Activated CD4-positive, alpha-beta memory T cell treated with anti-CD3 and anti-CD28 coated beads for 36 hours (primary cell): ENCODE measurements at regions of chr1 and their contacts with region 1.

Region 1: GRCh38 chr1:115052454-115053083 is 22.9 kb downstream of the TSHB start:
- DNase-seq: peak; percentile 67
- H3K4me3 Mint-ChIP-seq: no peak overlapping the region
- H3K27ac Mint-ChIP-seq: no peak overlapping the region
- H3K4me1 Mint-ChIP-seq: peaks cover 3% of the 10 kb centered on the region
- H3K27me3 Mint-ChIP-seq: no peaks in the 10 kb centered on the region

Region 2: DNA sequence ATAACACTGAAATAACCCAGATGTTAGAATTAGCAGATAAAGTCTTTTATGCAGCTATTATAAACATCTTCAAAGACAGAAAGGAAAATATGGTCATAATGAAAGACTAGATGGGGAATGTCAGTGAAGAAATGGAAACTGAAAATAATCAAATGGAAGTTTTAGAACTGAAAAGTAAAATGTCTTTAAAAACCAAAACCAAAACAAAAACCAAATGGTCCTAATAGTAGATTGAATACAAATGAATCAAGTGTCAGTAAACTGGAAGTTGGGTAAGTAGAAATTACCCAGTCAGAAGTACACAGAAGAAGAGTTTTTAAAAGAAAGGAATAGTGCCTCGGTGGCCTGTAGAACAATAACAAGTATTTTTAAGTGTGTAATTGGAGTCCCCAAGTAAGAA is 125.2 kb before region 1 on chr1:
- CTCF ChIA-PET with region 1: no interaction called
- POLR2A ChIA-PET with region 1: no interaction called
- intact Hi-C with region 1: no loop called
- DNase-seq: no peak
- H3K4me3 Mint-ChIP-seq: no peak overlapping the region
- H3K27ac Mint-ChIP-seq: no peak overlapping the region
- H3K4me1 Mint-ChIP-seq: peaks cover 5% of the 10 kb centered on the region
- H3K27me3 Mint-ChIP-seq: peaks cover 21% of the 10 kb centered on the region

Region 3: DNA sequence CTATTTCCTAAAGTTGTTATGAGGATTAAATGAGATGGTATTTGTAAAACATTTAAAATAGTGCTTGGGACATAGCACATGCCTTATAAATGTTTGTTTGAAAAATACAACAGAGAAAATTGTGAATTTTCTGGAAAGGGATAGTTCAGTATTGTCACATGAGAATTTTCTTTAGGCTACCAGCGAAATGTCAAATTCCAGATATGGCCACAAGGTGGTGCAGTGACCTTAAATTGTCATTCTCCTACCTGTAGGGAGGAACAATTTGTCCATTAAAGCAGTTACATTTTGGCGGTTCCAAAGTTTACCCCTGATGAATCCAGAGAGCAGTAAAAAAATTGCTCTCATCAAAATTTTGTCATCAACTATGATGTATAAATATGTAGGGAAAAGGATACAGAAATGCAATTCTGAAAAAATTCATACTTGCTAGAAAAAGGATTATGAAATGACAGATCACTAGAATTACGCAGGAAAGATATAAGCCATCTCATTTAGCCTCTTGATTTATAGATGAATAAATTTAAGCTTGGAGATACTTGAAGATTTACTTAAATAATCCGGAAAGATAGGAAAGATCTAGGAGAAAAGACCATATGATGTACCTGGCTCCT is 73.2 kb before region 1 on chr1:
- CTCF ChIA-PET with region 1: interaction called, 22 read pairs
- POLR2A ChIA-PET with region 1: no interaction called
- intact Hi-C with region 1: loop called (anchors 1 kb)
- DNase-seq: peak; percentile 72
- H3K4me3 Mint-ChIP-seq: no peak overlapping the region
- H3K27ac Mint-ChIP-seq: no peak overlapping the region
- H3K4me1 Mint-ChIP-seq: no peaks in the 10 kb centered on the region
- H3K27me3 Mint-ChIP-seq: peaks cover 10% of the 10 kb centered on the region

Region 4: GRCh38 chr1:115041654-115042053 is 10.9 kb before region 1 on chr1:
- CTCF ChIA-PET with region 1: interaction called, 10 read pairs
- POLR2A ChIA-PET with region 1: no interaction called
- intact Hi-C with region 1: no loop called
- DNase-seq: no peak
- H3K4me3 Mint-ChIP-seq: no peak overlapping the region
- H3K27ac Mint-ChIP-seq: no peak overlapping the region
- H3K4me1 Mint-ChIP-seq: no peaks in the 10 kb centered on the region
- H3K27me3 Mint-ChIP-seq: no peaks in the 10 kb centered on the region

Region 5: GRCh38 chr1:115073298-115074087 is 20.9 kb after region 1 on chr1:
- CTCF ChIA-PET with region 1: interaction called, 15 read pairs
- POLR2A ChIA-PET with region 1: interaction called, 3 read pairs
- intact Hi-C with region 1: no loop called
- DNase-seq: peak; percentile 31
- H3K4me3 Mint-ChIP-seq: no peak overlapping the region
- H3K27ac Mint-ChIP-seq: no peak overlapping the region
- H3K4me1 Mint-ChIP-seq: peaks cover 47% of the 10 kb centered on the region
- H3K27me3 Mint-ChIP-seq: no peaks in the 10 kb centered on the region